ENCODE measurements at regions of chr7 and their contacts with region 1.

Region 1: GRCh38 chr7:100852048-100852872 is at the start of gene SLC12A9:
- DNase-seq: peak; percentile 86 to 98
- H3K4me3 ChIP-seq: peak within 1 kb of the TSS; percentile 90
- CTCF ChIP-seq: peak in 1 of 3 donors; percentile 83
- POLR2A ChIP-seq: no peak
- total RNA-seq, gene SLC12A9: 14.0 to 32.9 (median 21.8) TPM

Region 2: DNA sequence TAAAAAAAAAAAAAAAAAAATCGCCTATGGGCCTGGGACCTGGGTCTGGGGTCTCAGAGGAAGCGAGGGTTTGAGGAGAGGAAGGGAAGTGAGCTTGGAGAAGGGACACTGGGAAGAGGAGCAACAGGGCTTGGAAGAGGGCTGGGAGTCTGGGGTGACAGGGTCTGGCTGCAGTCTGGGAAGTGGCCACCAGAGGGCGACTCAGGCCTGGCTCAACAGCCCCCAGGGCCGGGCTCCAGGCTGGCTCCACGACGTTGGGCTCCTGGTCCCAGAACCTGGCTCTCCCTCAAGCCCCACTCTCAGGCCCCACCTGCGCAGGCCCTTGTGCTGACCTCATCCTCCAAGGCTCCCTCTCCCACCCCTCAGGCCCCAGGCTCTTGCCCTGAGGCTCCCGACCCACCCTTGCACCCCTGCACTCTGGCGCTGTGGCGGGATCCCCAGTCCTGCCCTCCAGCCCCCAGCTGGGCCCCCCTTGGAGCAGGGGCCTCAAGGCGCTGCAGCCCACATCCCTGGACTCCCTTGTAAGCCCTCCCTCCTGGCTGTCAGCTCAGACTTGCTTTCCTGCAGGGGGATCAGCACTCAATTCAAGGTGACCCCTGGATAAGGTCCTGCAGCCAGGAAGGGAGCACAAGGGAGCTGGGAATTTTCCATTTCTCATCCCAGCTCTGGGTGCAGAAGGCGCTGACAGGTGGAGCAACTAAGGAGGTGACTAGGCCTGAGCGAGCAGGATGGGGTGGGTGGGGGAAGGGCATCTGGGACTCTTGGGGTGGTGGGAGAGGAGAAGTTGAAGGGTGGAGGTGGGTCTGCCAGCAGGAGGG is 382.8 kb before region 1 on chr7:
- intact Hi-C with region 1: loop called (anchors 10 kb)
- DNase-seq: peak; percentile 78 to 98
- H3K4me3 ChIP-seq: no peak overlapping the region
- CTCF ChIP-seq: peak in 1 of 3 donors; percentile 72
- POLR2A ChIP-seq: no peak

Region 3: DNA sequence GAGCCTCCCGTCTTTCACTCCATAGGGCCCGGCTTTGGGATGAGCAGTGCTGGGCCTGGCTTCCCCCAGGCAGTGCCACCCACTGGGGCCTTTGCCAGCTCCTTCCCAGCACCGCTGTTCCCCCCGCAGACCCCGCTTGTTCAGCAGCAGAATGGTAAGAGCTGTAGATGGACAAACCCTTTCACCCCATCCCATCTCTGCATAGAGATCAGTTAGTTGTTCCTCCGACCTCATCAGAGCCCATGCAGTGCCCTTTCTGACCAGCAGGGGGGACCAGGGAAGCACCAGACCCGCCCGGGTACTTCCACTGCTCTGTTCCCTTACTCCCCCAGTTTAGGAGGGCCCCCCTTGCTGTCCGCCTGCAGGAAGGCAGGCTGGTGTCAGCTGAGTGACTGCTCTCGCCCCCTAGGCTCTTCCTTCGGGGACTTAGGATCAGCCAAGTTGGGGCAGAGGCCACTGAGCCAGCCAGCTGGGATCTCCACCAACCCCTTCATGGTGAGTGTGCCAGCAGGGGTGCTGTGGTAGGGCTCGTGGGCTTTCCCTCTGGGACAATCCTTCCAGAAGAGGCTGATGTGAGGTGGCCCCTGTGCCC is 288.4 kb before region 1 on chr7:
- intact Hi-C with region 1: loop called (anchors 10 kb)
- DNase-seq: peak; percentile 84 to 97
- H3K4me3 ChIP-seq: no peak overlapping the region
- CTCF ChIP-seq: peak in 1 of 3 donors; percentile 89
- POLR2A ChIP-seq: no peak

Region 4: DNA sequence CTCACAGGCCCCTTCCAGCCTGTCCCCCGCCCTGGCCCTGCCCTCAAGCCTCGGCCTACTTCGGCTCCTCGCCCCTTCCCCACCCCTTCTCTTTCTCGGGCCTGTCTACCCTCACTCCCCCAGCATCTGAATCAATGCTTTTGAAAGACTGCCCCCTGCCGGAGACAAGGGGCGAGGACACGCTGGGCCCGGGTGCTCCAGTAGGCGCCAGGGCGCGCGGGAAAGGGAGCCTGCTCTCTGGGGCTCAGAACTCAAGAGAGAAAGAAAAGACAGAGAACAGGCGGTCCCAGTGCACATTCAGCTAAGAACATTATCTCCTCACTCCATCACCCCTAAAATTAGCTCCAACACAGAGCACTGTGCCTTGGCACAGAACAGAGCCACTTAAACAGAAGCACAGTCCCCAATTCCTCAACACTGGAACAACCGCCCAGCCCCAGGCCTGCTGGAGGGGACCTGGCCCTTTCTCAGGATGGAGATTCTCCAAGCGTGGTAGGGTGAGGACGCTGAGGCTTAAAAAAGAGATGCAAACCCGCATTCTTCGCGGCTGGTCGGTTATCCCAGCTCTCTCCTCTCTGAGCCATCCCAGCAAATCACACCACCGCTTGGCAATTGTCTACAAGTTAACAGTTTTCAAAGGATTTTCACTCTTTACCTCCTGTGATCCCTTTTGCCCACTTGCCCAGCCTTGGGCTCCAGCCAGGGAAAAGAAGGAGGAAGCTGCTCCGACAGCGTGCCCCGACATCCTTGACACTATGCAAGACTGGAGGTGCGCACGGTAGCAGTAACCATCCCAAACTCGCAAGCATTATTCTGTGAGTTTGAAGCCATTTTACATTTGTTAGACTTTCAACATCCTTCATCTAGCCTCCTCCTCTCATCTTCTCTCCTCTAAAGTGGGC is 160.3 kb before region 1 on chr7:
- intact Hi-C with region 1: loop called (anchors 5 kb)
- DNase-seq: peak; percentile 64 to 96
- H3K4me3 ChIP-seq: no peak overlapping the region
- CTCF ChIP-seq: peak in 1 of 3 donors; percentile 69
- POLR2A ChIP-seq: no peak

Region 5: GRCh38 chr7:100803398-100804233 is 48.6 kb before region 1 on chr7:
- intact Hi-C with region 1: loop called (anchors 5 kb)
- DNase-seq: peak; percentile 83 to 91
- H3K4me3 ChIP-seq: no peak overlapping the region
- CTCF ChIP-seq: no peak
- POLR2A ChIP-seq: no peak

Measured in lower leg skin (tissue), 4 donors.